HEK293T (cell line): ENCODE measurements at regions of chr1 and their contacts with region 1.

Region 1: GRCh38 chr1:150072959-150073358 is 5.4 kb downstream of the VPS45 start:
- DNase-seq: no peak

Region 2: GRCh38 chr1:150034336-150034735 is 38.6 kb before region 1 on chr1:
- CTCF ChIA-PET with region 1: no interaction called
- POLR2A ChIA-PET with region 1: no interaction called
- DNase-seq: no peak

Region 3: DNA sequence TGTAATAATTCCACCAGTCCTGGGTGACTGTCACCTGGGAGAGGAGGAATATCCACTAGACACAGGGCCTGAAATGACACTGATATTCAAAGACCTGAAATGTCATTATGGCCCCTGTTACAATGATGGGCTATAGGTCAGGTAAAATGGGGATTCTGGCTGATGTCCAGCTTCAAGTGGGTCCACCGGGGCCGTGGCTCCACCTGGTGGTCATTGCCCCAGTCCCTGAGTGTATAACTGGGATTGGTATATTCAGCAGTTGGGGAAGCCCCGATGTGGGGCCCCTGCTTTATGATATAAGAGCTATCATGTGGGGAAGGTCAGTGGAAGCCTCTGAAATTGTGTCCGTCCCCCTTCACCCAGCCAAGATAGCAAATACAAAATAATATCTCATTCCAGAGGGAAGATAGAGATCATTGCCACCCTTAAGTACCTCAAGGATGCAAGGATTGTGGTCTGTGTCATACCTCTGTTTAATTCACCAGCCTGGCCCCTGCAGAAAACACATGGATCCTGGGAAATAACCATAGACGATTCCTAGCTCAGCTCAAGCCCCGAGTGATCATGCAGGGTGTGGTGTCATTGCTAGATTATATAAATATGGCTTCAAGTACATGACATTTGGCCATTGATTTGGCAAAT is 96.1 kb after region 1 on chr1:
- CTCF ChIA-PET with region 1: interaction called, 16 read pairs
- POLR2A ChIA-PET with region 1: interaction called, 9 read pairs
- DNase-seq: peak; percentile 77

Region 4: DNA sequence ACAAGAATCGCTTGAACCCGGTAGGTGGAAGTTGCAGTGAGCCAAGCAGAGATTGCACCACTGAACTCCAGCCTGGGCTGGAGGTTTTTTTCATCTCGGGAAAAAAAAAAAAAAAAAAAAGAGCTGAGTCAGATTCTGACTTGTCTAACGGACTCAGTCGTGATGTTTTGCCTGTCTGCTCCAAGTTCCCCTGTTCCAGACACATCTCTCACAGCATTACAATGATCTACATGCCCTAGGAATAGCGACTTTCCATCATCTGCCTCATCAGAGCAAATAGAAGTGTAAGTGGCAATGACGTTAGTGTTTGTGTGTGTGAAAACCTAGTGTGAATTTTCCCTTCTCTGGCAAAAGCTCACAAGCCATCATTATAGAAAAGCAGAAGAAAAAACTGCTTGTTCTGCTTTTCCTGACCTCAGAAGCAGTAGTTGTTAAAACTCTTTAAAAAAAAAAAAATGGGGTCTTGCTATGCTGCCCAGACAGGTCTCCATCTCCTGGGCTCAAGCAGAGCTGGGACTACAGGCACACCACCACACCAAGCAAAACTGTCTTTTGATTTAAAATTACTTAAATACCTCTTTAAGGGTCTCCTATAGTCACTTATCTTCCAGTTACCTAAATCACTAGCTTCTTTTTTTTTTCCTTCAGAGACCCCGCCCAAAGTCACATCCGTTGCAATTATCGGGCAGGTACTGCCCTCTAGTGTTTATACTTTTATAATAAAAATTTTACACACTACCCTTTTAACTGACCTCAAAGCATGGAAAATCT is 114.0 kb after region 1 on chr1:
- CTCF ChIA-PET with region 1: interaction called, 11 read pairs
- POLR2A ChIA-PET with region 1: no interaction called
- DNase-seq: peak; percentile 55

Region 5: GRCh38 chr1:150256554-150257341 is 183.8 kb after region 1 on chr1:
- CTCF ChIA-PET with region 1: no interaction called
- POLR2A ChIA-PET with region 1: no interaction called
- DNase-seq: peak; percentile 13